ENCODE measurements at regions of chr17 and their contacts with region 1.

Region 1: DNA sequence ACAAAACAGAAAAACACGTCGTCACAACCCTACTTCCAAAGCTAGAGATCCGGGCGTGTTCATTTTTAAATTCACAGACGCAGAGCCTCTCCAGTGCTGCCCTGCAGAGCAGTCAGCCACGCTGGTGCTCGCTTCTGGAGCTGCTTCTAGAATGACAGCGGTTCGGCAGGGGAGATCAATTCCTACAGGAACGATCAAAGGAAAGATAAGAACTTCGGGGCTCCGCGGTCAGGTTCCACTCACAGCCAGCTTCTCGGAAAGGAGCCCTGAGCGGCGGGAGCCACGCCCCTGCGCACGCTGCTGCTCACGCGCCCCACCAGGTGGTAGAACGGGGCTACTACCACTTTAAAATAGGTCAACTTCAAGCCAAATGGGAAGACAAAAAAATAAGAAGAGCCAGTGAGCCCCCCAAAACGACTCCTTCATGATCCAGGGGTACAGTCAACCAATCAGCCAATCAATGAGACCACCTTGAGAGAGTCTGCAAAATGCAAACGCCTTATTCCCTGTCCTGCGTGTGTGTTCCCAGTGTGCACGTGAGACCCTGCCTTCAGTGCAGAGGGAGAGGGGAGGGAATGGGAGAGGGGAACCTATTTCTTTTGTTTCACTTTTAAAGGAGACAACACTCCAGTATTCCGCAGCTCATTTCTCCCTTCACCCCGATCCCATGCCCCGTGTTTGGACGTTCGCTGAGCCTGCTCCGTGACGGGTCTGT is 209.7 kb downstream of the RBFOX3 start:
- DNase-seq: peak; percentile 58 to 79
- H3K4me3 ChIP-seq: no peak overlapping the region
- H3K4me1 ChIP-seq: no peaks in the 10 kb centered on the region
- H3K27me3 ChIP-seq: peaks cover 26% of the 10 kb centered on the region

Region 2: DNA sequence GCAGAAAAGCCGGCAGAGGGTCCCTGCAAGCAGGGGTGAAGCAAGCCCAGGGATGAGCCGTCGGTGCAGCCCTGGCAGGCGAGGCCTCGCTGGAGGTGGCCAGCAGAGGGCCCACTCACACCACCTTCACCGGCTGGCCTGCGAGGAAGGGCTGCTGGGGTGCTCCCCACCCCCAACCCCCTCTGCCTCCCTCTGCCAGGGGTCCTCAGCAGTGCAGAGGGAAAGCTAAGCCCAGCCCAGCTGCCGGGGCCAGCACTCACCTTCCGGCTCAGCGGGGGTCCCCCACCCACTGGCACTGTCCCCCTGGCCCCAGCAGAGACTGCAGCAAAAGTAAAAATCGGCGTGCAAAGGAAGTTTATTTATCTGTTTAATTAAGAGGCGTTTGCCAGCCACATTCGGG is 213.1 kb before region 1 on chr17:
- in situ Hi-C with region 1: loop called (anchors 5 kb)
- DNase-seq: peak in 1 of 2 experiments; percentile 30
- H3K4me3 ChIP-seq: no peak overlapping the region
- H3K4me1 ChIP-seq: no peaks in the 10 kb centered on the region
- H3K27me3 ChIP-seq: peaks cover 56% of the 10 kb centered on the region

Region 3: GRCh38 chr17:79549141-79549915 is 148.2 kb after region 1 on chr17:
- in situ Hi-C with region 1: no loop called
- DNase-seq: no peak
- H3K4me3 ChIP-seq: no peak overlapping the region
- H3K4me1 ChIP-seq: no peaks in the 10 kb centered on the region
- H3K27me3 ChIP-seq: peaks cover 23% of the 10 kb centered on the region

Measured in HAP-1 (cell line).